GM12878 (cell line): ENCODE measurements at regions of chr19 and their contacts with region 1.

Region 1: GRCh38 chr19:1241417-1242095 is at the start of gene ATP5F1D:
- DNase-seq: peak; percentile 80
- ATAC-seq: peak; percentile 80
- H3K4me3 ChIP-seq: peak within 1 kb of the TSS; percentile 80
- H3K27ac ChIP-seq: peak within 1 kb of the TSS; percentile 73
- H3K4me1 ChIP-seq: peaks cover 24% of the 10 kb centered on the region
- H3K27me3 ChIP-seq: peaks cover 0 to 7% of the 10 kb centered on the region in 2 experiments; a peak in 3 of 4 replicates
- CTCF ChIP-seq: no peak
- EP300 ChIP-seq: no peak
- POLR2A ChIP-seq: peak; percentile 77
- RAD21 ChIP-seq: no peak
- polyA plus RNA-seq, gene ATP5F1D: 7.2 to 45.0 TPM

Region 2: GRCh38 chr19:1103708-1104310 is 137.7 kb before region 1 on chr19 and contains the start of gene GPX4:
- CTCF ChIA-PET with region 1: interaction called, 4 read pairs
- POLR2A ChIA-PET with region 1: no interaction called
- RAD21 ChIA-PET with region 1: no interaction called
- SMC1A ChIA-PET with region 1: interaction called, 3 read pairs
- in situ Hi-C with region 1: no loop called
- intact Hi-C with region 1: loop called (anchors 5 kb)
- DNase-seq: peak; percentile 96
- ATAC-seq: peak; percentile 80
- H3K4me3 ChIP-seq: peak within 1 kb of the TSS; percentile 91
- H3K27ac ChIP-seq: peak within 1 kb of the TSS; percentile 90
- H3K4me1 ChIP-seq: peaks cover 38% of the 10 kb centered on the region
- H3K27me3 ChIP-seq: no peaks in the 10 kb centered on the region
- CTCF ChIP-seq: no peak
- EP300 ChIP-seq: no peak
- POLR2A ChIP-seq: peak; percentile 99
- RAD21 ChIP-seq: no peak
- polyA plus RNA-seq, gene GPX4: 33.3 to 99.6 TPM

Region 3: GRCh38 chr19:1260636-1261537 is 19.3 kb after region 1 on chr19:
- CTCF ChIA-PET with region 1: interaction called, 363 read pairs
- POLR2A ChIA-PET with region 1: interaction called, 184 read pairs
- RAD21 ChIA-PET with region 1: interaction called, 336 read pairs
- SMC1A ChIA-PET with region 1: interaction called, 172 read pairs
- in situ Hi-C with region 1: no loop called
- intact Hi-C with region 1: loop called (anchors 1 kb)
- DNase-seq: peak; percentile 85
- ATAC-seq: peak; percentile 69
- H3K4me3 ChIP-seq: peak overlapping the region; percentile 92
- H3K27ac ChIP-seq: peak overlapping the region; percentile 96
- H3K4me1 ChIP-seq: peaks cover 54% of the 10 kb centered on the region
- H3K27me3 ChIP-seq: no peaks in the 10 kb centered on the region
- CTCF ChIP-seq: no peak
- EP300 ChIP-seq: 0 out of 4 replicates have a peak, but pooled peaks of 1 of the 2 experiments have one; percentile 19
- POLR2A ChIP-seq: peak; percentile 39; the same call in 1 of the 2 replicates
- RAD21 ChIP-seq: no peak

Region 4: DNA sequence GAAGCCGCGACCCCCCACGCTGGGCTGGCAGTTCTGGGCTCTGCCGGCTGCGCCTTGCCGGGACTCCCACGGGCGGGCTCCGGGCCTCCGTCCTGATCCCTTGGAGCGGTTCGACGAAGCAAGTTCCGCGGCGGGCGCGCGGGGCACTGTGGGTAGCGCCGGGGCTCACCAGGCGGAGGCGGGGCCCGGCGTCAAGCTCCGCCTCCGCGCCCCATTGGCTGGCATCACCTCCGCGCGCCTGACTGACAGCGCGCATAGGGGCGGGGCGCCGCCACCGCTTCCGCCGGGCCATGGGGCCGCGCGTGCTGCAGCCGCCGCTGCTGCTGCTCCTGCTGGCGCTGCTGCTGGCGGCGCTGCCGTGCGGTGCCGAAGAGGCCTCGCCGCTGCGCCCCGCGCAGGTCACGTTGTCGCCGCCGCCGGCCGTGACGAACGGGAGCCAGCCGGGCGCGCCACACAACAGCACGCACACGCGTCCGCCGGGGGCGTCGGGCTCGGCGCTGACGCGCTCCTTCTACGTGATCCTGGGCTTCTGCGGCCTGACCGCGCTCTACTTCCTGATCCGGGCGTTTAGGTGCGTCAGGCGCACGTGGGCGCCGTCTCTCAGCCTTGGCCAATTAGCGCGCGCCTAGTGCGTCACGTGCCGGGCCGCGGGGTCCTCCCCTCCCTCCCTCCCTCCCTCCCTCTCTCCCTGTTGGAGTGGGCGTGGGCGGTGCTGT is 33.9 kb after region 1 on chr19 and contains the start of gene FAM174C:
- CTCF ChIA-PET with region 1: interaction called, 32 read pairs
- POLR2A ChIA-PET with region 1: interaction called, 7 read pairs
- RAD21 ChIA-PET with region 1: interaction called, 29 read pairs
- SMC1A ChIA-PET with region 1: interaction called, 9 read pairs
- in situ Hi-C with region 1: no loop called
- intact Hi-C with region 1: no loop called
- DNase-seq: peak; percentile 87
- ATAC-seq: peak; percentile 83
- H3K4me3 ChIP-seq: peak within 1 kb of the TSS; percentile 85
- H3K27ac ChIP-seq: peak within 1 kb of the TSS; percentile 97
- H3K4me1 ChIP-seq: peaks cover 26% of the 10 kb centered on the region
- H3K27me3 ChIP-seq: no peaks in the 10 kb centered on the region
- CTCF ChIP-seq: no peak
- EP300 ChIP-seq: no peak
- POLR2A ChIP-seq: peak; percentile 89
- RAD21 ChIP-seq: no peak
- polyA plus RNA-seq, gene FAM174C: 0.89 to 6.9 TPM

Region 5: GRCh38 chr19:1304197-1304924 is 62.8 kb after region 1 on chr19:
- CTCF ChIA-PET with region 1: no interaction called
- POLR2A ChIA-PET with region 1: no interaction called
- RAD21 ChIA-PET with region 1: no interaction called
- SMC1A ChIA-PET with region 1: no interaction called
- in situ Hi-C with region 1: no loop called
- intact Hi-C with region 1: no loop called
- DNase-seq: no peak
- ATAC-seq: no peak
- H3K4me3 ChIP-seq: no peak overlapping the region
- H3K27ac ChIP-seq: no peak overlapping the region
- H3K4me1 ChIP-seq: no peaks in the 10 kb centered on the region
- H3K27me3 ChIP-seq: no peaks in the 10 kb centered on the region
- CTCF ChIP-seq: no peak
- EP300 ChIP-seq: no peak
- POLR2A ChIP-seq: no peak
- RAD21 ChIP-seq: no peak

Region 6: GRCh38 chr19:1383311-1384084 is 141.9 kb after region 1 on chr19 and contains the start of gene NDUFS7:
- CTCF ChIA-PET with region 1: interaction called, 11 read pairs
- POLR2A ChIA-PET with region 1: no interaction called
- RAD21 ChIA-PET with region 1: interaction called, 4 read pairs
- SMC1A ChIA-PET with region 1: interaction called, 6 read pairs
- in situ Hi-C with region 1: no loop called
- intact Hi-C with region 1: no loop called
- DNase-seq: peak; percentile 70
- ATAC-seq: peak; percentile 95
- H3K4me3 ChIP-seq: peak within 1 kb of the TSS; percentile 94
- H3K27ac ChIP-seq: peak within 1 kb of the TSS; percentile 86
- H3K4me1 ChIP-seq: no peaks in the 10 kb centered on the region
- H3K27me3 ChIP-seq: no peaks in the 10 kb centered on the region
- CTCF ChIP-seq: 0 out of 6 replicates have a peak, but pooled peaks of 1 of the 3 experiments have one; percentile 23
- EP300 ChIP-seq: peak in 1 of 2 experiments; percentile 9; a peak in 1 of 4 replicates
- POLR2A ChIP-seq: peak; percentile 96
- RAD21 ChIP-seq: 0 out of 2 replicates have a peak, but pooled peaks have one; percentile 5
- polyA plus RNA-seq, gene NDUFS7: 10.6 to 39.4 TPM